ENCODE measurements at regions of chrX and their contacts with region 1.

Region 1: DNA sequence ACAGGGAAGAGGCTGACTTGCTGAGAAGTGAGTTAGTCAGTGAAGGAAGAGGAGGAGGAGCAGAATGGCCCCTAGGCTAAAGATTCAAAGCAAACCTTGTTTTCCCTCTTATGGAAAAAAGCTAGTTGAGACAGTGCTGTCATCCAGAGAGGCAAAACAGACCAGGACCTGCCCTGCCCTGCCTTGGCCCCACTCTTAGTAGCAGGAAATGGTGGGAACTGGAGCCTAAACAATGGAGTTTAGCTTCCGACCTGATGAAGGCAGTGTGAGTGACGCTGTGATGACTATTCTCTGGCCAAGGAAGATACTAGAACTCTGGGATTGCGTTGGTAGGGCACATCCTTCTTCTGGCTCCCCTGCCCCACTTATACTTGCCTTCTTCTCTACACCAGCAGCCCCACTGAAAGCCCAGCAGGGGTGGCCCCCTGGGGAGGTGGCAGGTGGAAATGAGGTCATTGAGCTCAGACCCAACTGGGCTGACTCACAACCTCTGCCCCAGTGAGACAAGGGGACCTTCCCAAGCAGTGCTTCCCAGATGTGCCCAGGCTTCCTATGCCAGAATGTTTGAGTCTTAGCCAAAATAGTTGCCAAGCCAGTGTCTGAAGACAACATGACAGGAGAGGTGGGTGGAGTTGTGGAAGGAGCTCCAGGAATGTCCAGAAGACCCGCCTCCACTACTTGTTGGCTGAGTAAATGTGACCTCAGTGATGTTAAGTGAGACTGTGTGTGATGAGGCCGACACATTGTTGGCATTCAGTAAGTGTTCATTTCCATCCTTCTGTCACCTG is 38.8 kb downstream of the MSN start:
- DNase-seq: peak; percentile 20
- H3K4me3 Mint-ChIP-seq: peak overlapping the region; percentile 28
- H3K27ac Mint-ChIP-seq: peak overlapping the region; percentile 72
- H3K4me1 Mint-ChIP-seq: peaks cover 28% of the 10 kb centered on the region
- H3K27me3 Mint-ChIP-seq: no peaks in the 10 kb centered on the region
- CTCF ChIP-seq: no peak

Region 2: DNA sequence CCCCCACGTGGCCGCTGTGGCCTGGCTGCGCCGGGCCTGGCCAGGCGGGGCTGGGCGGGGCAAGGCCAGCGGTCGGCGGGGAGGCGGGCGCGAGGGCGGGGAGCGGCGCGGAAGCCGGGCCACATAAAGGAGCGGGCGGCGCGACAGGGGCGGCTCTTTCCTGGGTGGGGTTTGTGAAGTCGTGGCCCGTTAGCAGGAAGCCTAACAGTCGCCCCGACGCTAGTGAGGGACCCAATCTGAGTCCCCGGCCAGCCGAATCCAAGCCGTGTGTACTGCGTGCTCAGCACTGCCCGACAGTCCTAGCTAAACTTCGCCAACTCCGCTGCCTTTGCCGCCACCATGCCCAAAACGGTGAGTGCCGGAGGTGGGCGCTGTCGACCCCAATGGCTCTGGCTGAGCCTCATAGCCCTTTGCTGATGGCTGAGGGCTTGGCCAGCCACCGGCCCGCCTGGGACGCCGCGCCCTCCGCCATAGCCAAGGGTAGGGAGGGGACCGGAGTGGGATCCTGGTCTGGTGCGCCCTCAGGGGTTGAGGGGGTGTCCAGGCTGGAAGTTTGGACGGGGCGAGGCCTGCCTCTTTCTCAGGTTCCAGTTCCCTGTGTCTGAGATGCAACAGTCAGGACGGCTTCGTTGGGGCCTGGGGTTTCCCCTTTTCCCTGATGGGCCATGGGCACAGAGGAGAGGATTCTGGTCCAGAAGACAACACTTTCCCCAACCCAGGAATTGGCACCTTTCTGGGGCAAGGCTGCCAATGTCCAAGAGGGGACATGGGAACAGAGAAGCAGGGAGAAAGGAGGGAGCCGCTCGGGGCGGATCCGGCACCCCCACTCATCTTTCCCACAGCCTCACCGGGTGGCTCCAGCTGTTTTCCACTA is 38.5 kb before region 1 on chrX and contains the start of gene MSN:
- CTCF ChIA-PET with region 1: interaction called, 4 read pairs
- intact Hi-C with region 1: loop called (anchors 5 kb)
- DNase-seq: peak; percentile 78
- H3K4me3 Mint-ChIP-seq: peak within 1 kb of the TSS; percentile 81
- H3K27ac Mint-ChIP-seq: peak within 1 kb of the TSS; percentile 91
- H3K4me1 Mint-ChIP-seq: peaks cover 23% of the 10 kb centered on the region
- H3K27me3 Mint-ChIP-seq: no peaks in the 10 kb centered on the region
- CTCF ChIP-seq: no peak
- total RNA-seq, gene MSN: 101 and 129 TPM in 2 replicates

Region 3: DNA sequence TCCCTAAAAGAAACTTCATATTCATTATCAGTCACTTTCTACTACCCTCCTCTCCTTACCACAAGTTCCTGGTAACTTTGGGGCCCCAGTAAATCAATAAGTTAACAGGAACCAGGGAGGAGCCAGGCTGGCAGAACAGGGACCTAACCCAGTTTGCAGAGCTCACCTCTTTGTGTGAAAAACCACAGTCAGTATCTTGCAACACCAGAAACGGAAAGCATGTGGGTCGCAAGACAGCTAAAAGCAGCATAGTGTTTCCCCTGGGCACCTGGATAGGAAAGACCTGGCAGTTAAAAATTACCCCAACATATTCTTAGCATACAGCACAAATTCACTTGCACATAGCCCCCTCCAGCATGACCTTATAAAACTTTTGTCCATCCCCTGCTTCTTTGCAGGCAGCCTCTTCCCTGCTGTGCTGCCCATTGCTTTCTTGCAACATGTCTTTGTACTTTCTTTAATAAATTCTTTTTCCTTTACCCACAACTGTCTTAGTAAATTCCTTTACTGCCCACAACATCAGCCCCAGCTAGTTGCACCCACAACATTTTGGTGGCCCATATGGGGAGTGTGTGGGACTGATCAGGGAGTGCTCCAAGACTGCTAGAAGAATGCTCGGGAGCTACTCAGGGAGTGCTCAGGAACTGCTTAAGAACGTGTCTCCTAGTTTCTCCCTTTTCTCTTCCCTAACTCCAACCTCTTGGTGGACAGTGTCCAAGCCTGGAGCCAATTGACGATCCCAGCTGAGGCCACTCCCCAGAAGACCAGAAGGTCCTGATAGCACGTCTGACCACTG is 44.6 kb after region 1 on chrX:
- CTCF ChIA-PET with region 1: no interaction called
- intact Hi-C with region 1: no loop called
- DNase-seq: no peak
- H3K4me3 Mint-ChIP-seq: no peak overlapping the region
- H3K27ac Mint-ChIP-seq: no peak overlapping the region
- H3K4me1 Mint-ChIP-seq: peaks cover 7% of the 10 kb centered on the region
- H3K27me3 Mint-ChIP-seq: no peaks in the 10 kb centered on the region
- CTCF ChIP-seq: no peak

Region 4: GRCh38 chrX:65821721-65822496 is 115.7 kb after region 1 on chrX:
- CTCF ChIA-PET with region 1: no interaction called
- intact Hi-C with region 1: loop called (anchors 10 kb)
- DNase-seq: peak; percentile 56
- H3K4me3 Mint-ChIP-seq: peak overlapping the region; percentile 66
- H3K27ac Mint-ChIP-seq: no peak overlapping the region
- H3K4me1 Mint-ChIP-seq: no peaks in the 10 kb centered on the region
- H3K27me3 Mint-ChIP-seq: no peaks in the 10 kb centered on the region
- CTCF ChIP-seq: no peak

Region 5: GRCh38 chrX:65871661-65872311 is 165.6 kb after region 1 on chrX:
- CTCF ChIA-PET with region 1: no interaction called
- intact Hi-C with region 1: no loop called
- DNase-seq: peak; percentile 73
- H3K4me3 Mint-ChIP-seq: no peak overlapping the region
- H3K27ac Mint-ChIP-seq: peak overlapping the region; percentile 57
- H3K4me1 Mint-ChIP-seq: peaks cover 17% of the 10 kb centered on the region
- H3K27me3 Mint-ChIP-seq: no peaks in the 10 kb centered on the region
- CTCF ChIP-seq: peak; percentile 42

Region 6: DNA sequence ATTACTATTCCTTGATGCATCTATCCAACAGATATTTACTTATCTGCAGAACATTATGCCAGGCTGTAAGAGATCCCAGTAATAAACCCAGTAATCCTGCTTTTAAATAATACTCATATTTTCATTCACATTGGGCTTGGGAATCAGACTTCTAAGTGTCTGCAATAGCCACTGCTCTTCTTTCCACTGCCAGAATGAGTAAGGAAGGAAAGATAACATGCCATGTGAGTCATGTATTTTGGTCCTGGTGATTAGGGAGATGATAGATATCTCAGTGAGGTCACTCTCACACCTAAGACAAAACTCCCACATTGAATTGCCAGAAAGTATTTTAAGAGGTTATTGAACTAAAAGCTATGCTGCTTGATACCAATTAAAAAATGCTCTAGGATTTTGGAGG is 443.9 kb after region 1 on chrX:
- CTCF ChIA-PET with region 1: no interaction called
- intact Hi-C with region 1: no loop called
- DNase-seq: no peak
- H3K4me3 Mint-ChIP-seq: no peak overlapping the region
- H3K27ac Mint-ChIP-seq: no peak overlapping the region
- H3K4me1 Mint-ChIP-seq: no peaks in the 10 kb centered on the region
- H3K27me3 Mint-ChIP-seq: no peaks in the 10 kb centered on the region
- CTCF ChIP-seq: no peak